Naive thymus-derived CD4-positive, alpha-beta T cell (primary cell): ENCODE measurements at regions of chr16 and their contacts with region 1.

Region 1: DNA sequence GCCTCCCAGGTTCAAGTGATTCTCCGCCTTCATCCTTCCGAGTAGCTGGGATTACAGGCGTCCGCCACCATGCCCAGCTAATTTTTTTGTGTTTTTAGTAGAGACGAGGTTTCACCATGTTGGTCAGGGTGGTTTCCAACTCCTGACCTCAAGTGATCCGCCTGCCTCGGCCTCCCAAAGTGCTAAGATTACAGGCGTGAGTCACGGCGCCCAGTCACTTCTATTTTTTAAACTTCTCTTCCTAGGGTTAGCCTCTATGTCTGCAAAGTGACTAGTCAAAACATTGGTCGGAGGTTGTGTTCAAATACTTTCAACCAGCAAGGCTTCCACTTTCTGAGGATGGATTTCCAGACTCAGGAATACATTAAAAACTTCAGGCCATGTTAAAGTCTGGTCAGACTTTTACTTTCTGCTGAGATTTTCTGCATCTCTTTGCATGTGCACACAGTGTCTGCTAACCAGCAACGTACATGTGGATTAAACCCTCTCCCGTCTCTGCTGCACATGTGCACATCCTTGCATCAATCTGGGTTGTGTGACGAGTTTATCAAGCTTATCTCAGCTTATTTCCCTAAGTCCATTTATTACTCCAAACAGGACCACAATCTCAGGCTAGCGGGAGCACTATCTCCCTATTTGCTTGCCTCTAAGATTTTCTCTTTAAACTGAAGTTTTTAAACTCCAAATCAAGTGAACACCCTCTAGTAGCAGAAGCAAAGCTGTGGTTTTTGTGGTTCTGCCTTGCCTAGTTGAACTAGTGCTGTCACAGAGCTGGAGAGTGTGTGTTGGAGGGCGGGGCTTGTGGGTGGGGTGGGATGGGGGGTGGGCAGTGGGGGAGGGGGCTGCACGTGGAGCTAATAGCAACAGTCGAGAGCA is 525.2 kb upstream of the GOT2 start:
- DNase-seq: peak in 7 of 9 donors; percentile 2 to 56 (median 52)
- ATAC-seq: peak; percentile 81
- H3K4me3 ChIP-seq: peak overlapping the region; percentile 21
- H3K4me3 Mint-ChIP-seq: peak overlapping the region; percentile 22 to 86 (median 76)
- H3K27ac ChIP-seq: no peak overlapping the region
- H3K27ac Mint-ChIP-seq: peak overlapping the region in 8 of 9 donors; percentile 50 to 95 (median 76)
- H3K4me1 ChIP-seq: peaks cover 0 to 9% of the 10 kb centered on the region in 2 donors
- H3K4me1 Mint-ChIP-seq: peaks cover 14 to 41% (median 21%) of the 10 kb centered on the region in 7 donors
- H3K27me3 ChIP-seq: no peaks in the 10 kb centered on the region
- H3K27me3 Mint-ChIP-seq: peaks cover 0 to 5% (median 0%) of the 10 kb centered on the region in 5 donors

Region 2: GRCh38 chr16:59192551-59193199 is 66.6 kb before region 1 on chr16:
- CTCF ChIA-PET with region 1: no interaction called
- POLR2A ChIA-PET with region 1: no interaction called
- intact Hi-C with region 1: loop called in 1 of 2 experiments (anchors 2 kb)
- DNase-seq: peak in 5 of 9 donors; percentile 2 to 44 (median 18)
- ATAC-seq: no peak
- H3K4me3 ChIP-seq: no peak overlapping the region
- H3K4me3 Mint-ChIP-seq: peak overlapping the region in 5 of 10 donors; percentile 31 to 71 (median 55)
- H3K27ac ChIP-seq: no peak overlapping the region
- H3K27ac Mint-ChIP-seq: peak overlapping the region in 1 of 9 donors; percentile 25
- H3K4me1 ChIP-seq: no peaks in the 10 kb centered on the region
- H3K4me1 Mint-ChIP-seq: peaks cover 0 to 10% (median 0%) of the 10 kb centered on the region in 7 donors
- H3K27me3 ChIP-seq: no peaks in the 10 kb centered on the region
- H3K27me3 Mint-ChIP-seq: no peaks in the 10 kb centered on the region

Region 3: DNA sequence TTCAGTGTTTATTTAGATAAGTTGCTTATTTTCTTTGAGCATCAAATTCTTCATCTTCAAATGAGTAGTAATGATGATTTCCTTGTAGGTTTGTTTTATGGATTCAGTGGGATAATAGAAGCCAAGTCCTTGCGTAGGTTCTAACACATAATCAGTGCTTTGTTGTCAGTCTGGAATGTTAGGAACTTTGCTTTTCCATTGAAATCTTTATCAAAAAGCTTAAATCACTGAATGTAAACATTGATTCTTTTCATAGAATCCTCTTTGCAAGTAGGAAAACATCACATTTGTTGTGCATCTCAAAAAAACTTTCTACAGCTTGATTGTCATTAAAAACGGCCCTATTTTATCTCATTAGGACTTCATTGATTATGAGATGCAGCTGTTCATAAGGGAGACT is 34.9 kb before region 1 on chr16:
- CTCF ChIA-PET with region 1: no interaction called
- POLR2A ChIA-PET with region 1: no interaction called
- intact Hi-C with region 1: loop called in 1 of 2 experiments (anchors 5 kb)
- DNase-seq: no peak
- ATAC-seq: no peak
- H3K4me3 ChIP-seq: no peak overlapping the region
- H3K4me3 Mint-ChIP-seq: no peak overlapping the region
- H3K27ac ChIP-seq: no peak overlapping the region
- H3K27ac Mint-ChIP-seq: no peak overlapping the region
- H3K4me1 ChIP-seq: no peaks in the 10 kb centered on the region
- H3K4me1 Mint-ChIP-seq: peaks cover 0 to 4% (median 0%) of the 10 kb centered on the region in 7 donors
- H3K27me3 ChIP-seq: no peaks in the 10 kb centered on the region
- H3K27me3 Mint-ChIP-seq: peaks cover 0 to 9% (median 0%) of the 10 kb centered on the region in 5 donors

Region 4: DNA sequence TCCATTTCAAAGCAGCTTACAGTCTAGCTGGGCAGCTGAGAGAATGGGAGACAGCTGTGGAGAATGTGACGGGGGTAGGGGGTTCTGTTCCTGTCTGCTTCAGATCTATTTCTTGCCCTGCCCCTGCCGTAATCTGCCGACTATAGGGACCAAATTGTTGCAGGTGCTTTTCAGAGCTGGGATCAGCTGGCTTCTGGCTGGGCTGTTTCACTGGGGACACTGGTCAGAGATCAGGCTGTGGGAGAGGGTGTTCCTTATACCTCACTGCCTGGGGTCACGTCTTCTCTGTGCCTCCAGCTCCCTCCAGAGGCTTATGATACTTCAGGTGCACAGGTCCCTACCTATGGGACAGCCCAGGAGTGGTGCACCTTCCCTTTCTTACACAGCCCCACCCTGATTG is 10.3 kb before region 1 on chr16:
- CTCF ChIA-PET with region 1: no interaction called
- POLR2A ChIA-PET with region 1: interaction called, 3 read pairs
- intact Hi-C with region 1: loop called in 1 of 2 experiments (anchors 2 kb)
- DNase-seq: no peak
- ATAC-seq: no peak
- H3K4me3 ChIP-seq: no peak overlapping the region
- H3K4me3 Mint-ChIP-seq: no peak overlapping the region
- H3K27ac ChIP-seq: no peak overlapping the region
- H3K27ac Mint-ChIP-seq: no peak overlapping the region
- H3K4me1 ChIP-seq: no peaks in the 10 kb centered on the region
- H3K4me1 Mint-ChIP-seq: peaks cover 0 to 5% (median 0%) of the 10 kb centered on the region in 7 donors
- H3K27me3 ChIP-seq: no peaks in the 10 kb centered on the region
- H3K27me3 Mint-ChIP-seq: no peaks in the 10 kb centered on the region

Region 5: GRCh38 chr16:59295993-59296736 is 36.9 kb after region 1 on chr16:
- CTCF ChIA-PET with region 1: no interaction called
- POLR2A ChIA-PET with region 1: no interaction called
- intact Hi-C with region 1: loop called in 1 of 2 experiments (anchors 5 kb)
- DNase-seq: no peak
- ATAC-seq: no peak
- H3K4me3 ChIP-seq: no peak overlapping the region
- H3K4me3 Mint-ChIP-seq: no peak overlapping the region
- H3K27ac ChIP-seq: no peak overlapping the region
- H3K27ac Mint-ChIP-seq: no peak overlapping the region
- H3K4me1 ChIP-seq: no peaks in the 10 kb centered on the region
- H3K4me1 Mint-ChIP-seq: peaks cover 0 to 7% (median 0%) of the 10 kb centered on the region in 7 donors
- H3K27me3 ChIP-seq: no peaks in the 10 kb centered on the region
- H3K27me3 Mint-ChIP-seq: peaks cover 0 to 3% (median 0%) of the 10 kb centered on the region in 5 donors